K562 (cell line): ENCODE measurements at regions of chr2 and their contacts with region 1.

Region 1: GRCh38 chr2:38750891-38751595 is at the start of gene SRSF7:
- DNase-seq: peak; percentile 91 to 99 (median 95)
- ATAC-seq: peak; percentile 86
- H3K4me3 ChIP-seq: peak within 1 kb of the TSS; percentile 82
- H3K27ac ChIP-seq: peak within 1 kb of the TSS; percentile 99
- H3K4me1 ChIP-seq: peaks cover 0 to 29% of the 10 kb centered on the region in 2 experiments; a peak in 3 of 5 replicates
- H3K27me3 ChIP-seq: no peaks in the 10 kb centered on the region
- CTCF ChIP-seq: no peak
- EP300 ChIP-seq: peak; percentile 25
- POLR2A ChIP-seq: peak; percentile 100
- RAD21 ChIP-seq: peak in 1 of 2 experiments; percentile 16; a peak in 2 of 4 replicates
- polyA plus RNA-seq, gene SRSF7: 696 to 706 TPM

Region 2: GRCh38 chr2:38377050-38377828 is 373.8 kb before region 1 on chr2 and contains the start of gene ATL2:
- CTCF ChIA-PET with region 1: no interaction called
- POLR2A ChIA-PET with region 1: interaction called, 13 read pairs
- in situ Hi-C with region 1: no loop called
- intact Hi-C with region 1: no loop called
- DNase-seq: peak; percentile 91 to 97 (median 92)
- ATAC-seq: peak; percentile 80
- H3K4me3 ChIP-seq: peak within 1 kb of the TSS; percentile 91
- H3K27ac ChIP-seq: peak within 1 kb of the TSS; percentile 96
- H3K4me1 ChIP-seq: peaks cover 11 to 34% of the 10 kb centered on the region in 2 experiments
- H3K27me3 ChIP-seq: no peaks in the 10 kb centered on the region
- CTCF ChIP-seq: no peak
- EP300 ChIP-seq: peak; percentile 40
- POLR2A ChIP-seq: peak; percentile 92
- RAD21 ChIP-seq: no peak
- polyA plus RNA-seq, gene ATL2: 12.0 to 18.3 TPM

Region 3: GRCh38 chr2:38602732-38603401 is 148.2 kb before region 1 on chr2 and contains the start of gene HNRNPLL:
- CTCF ChIA-PET with region 1: no interaction called
- POLR2A ChIA-PET with region 1: interaction called, 24 read pairs
- in situ Hi-C with region 1: no loop called
- intact Hi-C with region 1: no loop called
- DNase-seq: peak; percentile 97 to 99 (median 98)
- ATAC-seq: peak; percentile 80
- H3K4me3 ChIP-seq: peak within 1 kb of the TSS; percentile 92
- H3K27ac ChIP-seq: peak within 1 kb of the TSS; percentile 92
- H3K4me1 ChIP-seq: peaks cover 7 to 34% of the 10 kb centered on the region in 2 experiments
- H3K27me3 ChIP-seq: no peaks in the 10 kb centered on the region
- CTCF ChIP-seq: peak in 2 of 3 experiments; percentile 17 to 33; a peak in 3 of 6 replicates
- EP300 ChIP-seq: peak; percentile 61; the same call in 1 of the 2 replicates
- POLR2A ChIP-seq: peak; percentile 92
- RAD21 ChIP-seq: no peak
- polyA plus RNA-seq, gene HNRNPLL: 19.8 to 24.7 TPM

Region 4: DNA sequence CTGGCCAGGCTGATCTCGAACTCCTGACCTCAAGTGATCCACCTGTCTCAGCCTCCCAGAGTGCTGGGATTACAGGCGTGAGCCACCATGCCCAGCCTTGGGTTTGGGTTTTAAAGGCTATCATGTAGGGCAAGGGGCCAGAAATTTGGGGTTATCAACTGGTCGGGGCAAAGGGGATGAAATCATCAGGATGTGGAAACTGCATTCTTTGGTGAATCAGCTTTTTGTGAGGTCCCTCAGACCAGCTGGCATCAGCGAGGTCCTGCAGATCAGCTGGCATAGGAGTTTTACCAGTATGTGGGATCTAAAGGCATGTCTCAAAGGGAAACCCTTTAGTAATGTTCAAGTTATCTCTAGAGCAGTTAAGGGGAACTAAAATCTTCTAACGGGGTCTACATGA is 20.6 kb after region 1 on chr2:
- CTCF ChIA-PET with region 1: no interaction called
- POLR2A ChIA-PET with region 1: interaction called, 107 read pairs
- in situ Hi-C with region 1: no loop called
- intact Hi-C with region 1: no loop called
- DNase-seq: no peak
- ATAC-seq: no peak
- H3K4me3 ChIP-seq: no peak overlapping the region
- H3K27ac ChIP-seq: no peak overlapping the region
- H3K4me1 ChIP-seq: peaks cover 3 to 5% of the 10 kb centered on the region in 2 experiments; a peak in 3 of 5 replicates
- H3K27me3 ChIP-seq: no peaks in the 10 kb centered on the region
- CTCF ChIP-seq: no peak
- EP300 ChIP-seq: no peak
- POLR2A ChIP-seq: no peak
- RAD21 ChIP-seq: no peak

Region 5: DNA sequence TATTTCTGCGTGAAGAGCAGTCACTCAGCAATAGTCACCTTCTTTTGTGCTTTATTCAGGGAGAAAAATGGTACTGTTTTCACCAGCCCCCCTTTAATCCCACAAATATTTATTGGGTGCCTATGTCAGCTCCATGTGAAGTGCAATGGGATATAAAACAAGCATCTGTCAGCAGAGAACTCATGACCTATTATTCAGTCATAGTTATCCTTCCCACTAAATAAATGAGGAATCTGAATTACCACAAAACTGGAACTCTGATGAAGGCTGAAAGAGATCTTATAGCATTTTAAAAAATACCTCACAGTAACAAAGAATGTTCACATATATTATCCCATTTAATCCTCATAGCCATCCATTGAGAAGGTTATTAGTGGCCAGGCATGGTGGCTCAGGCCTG is 78.9 kb after region 1 on chr2:
- CTCF ChIA-PET with region 1: no interaction called
- POLR2A ChIA-PET with region 1: interaction called, 28 read pairs
- in situ Hi-C with region 1: no loop called
- intact Hi-C with region 1: loop called (anchors 2 kb)
- DNase-seq: no peak
- ATAC-seq: no peak
- H3K4me3 ChIP-seq: no peak overlapping the region
- H3K27ac ChIP-seq: no peak overlapping the region
- H3K4me1 ChIP-seq: peaks cover 0 to 6% of the 10 kb centered on the region in 2 experiments; a peak in 2 of 5 replicates
- H3K27me3 ChIP-seq: no peaks in the 10 kb centered on the region
- CTCF ChIP-seq: no peak
- EP300 ChIP-seq: no peak
- POLR2A ChIP-seq: no peak
- RAD21 ChIP-seq: no peak

Region 6: GRCh38 chr2:39124000-39124745 is 373.1 kb after region 1 on chr2:
- CTCF ChIA-PET with region 1: no interaction called
- POLR2A ChIA-PET with region 1: interaction called, 4 read pairs
- in situ Hi-C with region 1: no loop called
- intact Hi-C with region 1: loop called (anchors 5 kb)
- DNase-seq: peak; percentile 88 to 99 (median 89)
- ATAC-seq: peak; percentile 82
- H3K4me3 ChIP-seq: peak overlapping the region; percentile 56
- H3K27ac ChIP-seq: peak overlapping the region; percentile 85
- H3K4me1 ChIP-seq: peaks cover 28% of the 10 kb centered on the region in 2 experiments; a peak in 4 of 5 replicates
- H3K27me3 ChIP-seq: no peaks in the 10 kb centered on the region
- CTCF ChIP-seq: peak; percentile 60 to 89 (median 65)
- EP300 ChIP-seq: peak; percentile 50
- POLR2A ChIP-seq: peak; percentile 84
- RAD21 ChIP-seq: 0 out of 4 replicates have a peak, but pooled peaks have one; percentile 14 to 18